Motor neuron (in vitro differentiated cells): ENCODE measurements at regions of chr2 and their contacts with region 1.

Region 1: GRCh38 chr2:177489719-177490301 is 97.2 kb downstream of the AGPS start:
- ATAC-seq: peak in 3 of 8 experiments; percentile 34 to 62 (median 44)
- H3K4me3 ChIP-seq: no peak overlapping the region
- H3K27ac ChIP-seq: no peak overlapping the region
- H3K4me1 ChIP-seq: peaks cover 0 to 2% of the 10 kb centered on the region in 2 donors

Region 2: GRCh38 chr2:177724398-177725287 is 234.8 kb after region 1 on chr2:
- in situ Hi-C with region 1: loop called in 4 of 9 experiments (anchors 25 kb)
- ATAC-seq: peak; percentile 51 to 82 (median 64)
- H3K4me3 ChIP-seq: no peak overlapping the region
- H3K27ac ChIP-seq: peak overlapping the region in 1 of 2 donors; percentile 65
- H3K4me1 ChIP-seq: peaks cover 38 to 97% of the 10 kb centered on the region in 2 donors